ENCODE measurements at regions of chr11 and their contacts with region 1.

Region 1: DNA sequence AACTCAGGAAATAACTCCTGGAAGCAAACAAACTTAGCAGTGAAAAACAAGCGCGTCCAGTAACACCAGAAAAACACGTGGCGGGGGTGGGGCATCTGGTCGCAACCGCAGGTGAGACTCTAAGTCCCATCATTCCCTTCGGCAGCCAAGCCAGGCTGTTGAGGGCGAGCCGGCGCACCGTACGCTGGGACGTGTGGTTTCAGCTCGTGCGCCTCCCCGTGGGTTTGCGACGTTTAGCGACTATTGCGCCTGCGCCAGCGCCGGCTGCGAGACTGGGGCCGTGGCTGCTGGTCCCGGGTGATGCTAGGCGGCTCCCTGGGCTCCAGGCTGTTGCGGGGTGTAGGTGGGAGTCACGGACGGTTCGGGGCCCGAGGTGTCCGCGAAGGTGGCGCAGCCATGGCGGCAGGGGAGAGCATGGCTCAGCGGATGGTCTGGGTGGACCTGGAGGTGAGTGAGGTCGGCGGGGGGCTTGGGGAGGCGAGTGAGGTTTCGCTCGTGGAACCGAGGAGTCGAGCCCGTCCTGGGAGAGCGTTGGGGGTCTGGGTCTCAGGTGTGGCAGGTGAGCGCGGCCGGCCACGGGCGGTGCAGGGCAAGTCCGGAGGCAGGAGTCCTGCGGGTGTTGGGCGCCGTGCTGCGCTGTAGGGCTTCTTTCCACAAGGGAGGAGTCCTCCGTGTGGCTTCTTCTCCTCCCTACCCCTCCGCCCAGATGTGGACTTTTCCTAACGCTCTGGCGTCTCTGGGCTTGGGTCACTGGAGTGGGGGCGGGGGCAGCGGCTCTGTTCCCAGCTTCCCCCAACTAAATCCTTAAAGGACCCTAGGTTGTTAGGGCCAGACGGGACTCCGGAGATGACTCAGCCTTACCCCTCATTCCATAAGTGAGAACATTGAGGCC is at the start of gene REXO2:
- DNase-seq: peak in 1 of 2 donors; percentile 96
- H3K4me3 ChIP-seq: peak within 1 kb of the TSS; percentile 78 to 97
- H3K27ac ChIP-seq: peak within 1 kb of the TSS; percentile 87
- H3K4me1 ChIP-seq: peaks cover 29% of the 10 kb centered on the region
- H3K27me3 ChIP-seq: no peaks in the 10 kb centered on the region
- CTCF ChIP-seq: peak in 2 of 3 experiments; percentile 6 to 13
- POLR2A ChIP-seq: peak in 1 of 2 donors; percentile 77
- total RNA-seq, gene REXO2: 146 TPM

Region 2: GRCh38 chr11:114400217-114400914 is 39.1 kb before region 1 on chr11 and contains the starts of genes C11orf71 and RBM7:
- intact Hi-C with region 1: no loop called
- DNase-seq: peak in 1 of 2 donors; percentile 98
- H3K4me3 ChIP-seq: peak within 1 kb of the TSS; percentile 64 to 75
- H3K27ac ChIP-seq: peak within 1 kb of the TSS; percentile 98
- H3K4me1 ChIP-seq: peaks cover 57% of the 10 kb centered on the region
- H3K27me3 ChIP-seq: no peaks in the 10 kb centered on the region
- CTCF ChIP-seq: peak in 1 of 3 experiments; percentile 14
- POLR2A ChIP-seq: peak; percentile 21 to 87
- total RNA-seq, gene C11orf71: 2.7 TPM
- total RNA-seq, gene RBM7: 24.8 TPM

Region 3: GRCh38 chr11:114412946-114413345 is 26.5 kb before region 1 on chr11:
- intact Hi-C with region 1: loop called (anchors 2 kb)
- DNase-seq: no peak
- H3K4me3 ChIP-seq: no peak overlapping the region
- H3K27ac ChIP-seq: no peak overlapping the region
- H3K4me1 ChIP-seq: no peaks in the 10 kb centered on the region
- H3K27me3 ChIP-seq: no peaks in the 10 kb centered on the region
- CTCF ChIP-seq: no peak
- POLR2A ChIP-seq: no peak

Region 4: DNA sequence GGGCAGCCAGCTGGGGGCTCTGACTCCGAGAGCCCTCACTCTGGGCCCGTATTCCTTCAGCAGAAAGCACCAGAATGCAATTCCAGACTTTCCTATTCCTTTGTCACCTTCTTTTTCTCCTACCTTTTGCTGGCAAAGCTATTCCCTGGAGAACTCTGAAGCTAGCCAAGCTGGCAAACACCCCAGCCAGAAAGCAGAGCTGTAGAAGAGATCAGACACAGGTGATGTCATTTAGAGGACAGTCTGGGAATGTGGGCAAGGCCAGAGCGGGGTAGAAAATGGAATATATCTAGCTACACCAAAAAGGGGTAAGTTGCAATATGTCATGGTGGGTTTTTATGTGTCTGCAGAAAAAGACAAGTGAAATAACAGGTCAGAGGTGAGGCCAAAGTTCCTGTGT is 444.0 kb after region 1 on chr11:
- intact Hi-C with region 1: no loop called
- DNase-seq: no peak
- H3K4me3 ChIP-seq: no peak overlapping the region
- H3K27ac ChIP-seq: no peak overlapping the region
- H3K4me1 ChIP-seq: no peaks in the 10 kb centered on the region
- H3K27me3 ChIP-seq: no peaks in the 10 kb centered on the region
- CTCF ChIP-seq: no peak
- POLR2A ChIP-seq: no peak